ENCODE measurements at regions of chr4 and their contacts with region 1.

Region 1: GRCh38 chr4:7802093-7802726 is 137.5 kb downstream of the AFAP1 start:
- DNase-seq: peak; percentile 91
- ATAC-seq: peak; percentile 97
- H3K4me3 Mint-ChIP-seq: no peak overlapping the region
- H3K27ac Mint-ChIP-seq: no peak overlapping the region
- H3K4me1 Mint-ChIP-seq: peaks cover 9% of the 10 kb centered on the region
- H3K27me3 Mint-ChIP-seq: no peaks in the 10 kb centered on the region
- CTCF ChIP-seq: peak; percentile 93

Region 2: GRCh38 chr4:7761720-7762119 is 40.5 kb before region 1 on chr4:
- CTCF ChIA-PET with region 1: interaction called, 63 read pairs
- POLR2A ChIA-PET with region 1: interaction called, 3 read pairs
- intact Hi-C with region 1: loop called (anchors 5 kb)
- DNase-seq: peak; percentile 71
- ATAC-seq: peak; percentile 63
- H3K4me3 Mint-ChIP-seq: no peak overlapping the region
- H3K27ac Mint-ChIP-seq: peak overlapping the region; percentile 71
- H3K4me1 Mint-ChIP-seq: peaks cover 39% of the 10 kb centered on the region
- H3K27me3 Mint-ChIP-seq: no peaks in the 10 kb centered on the region
- CTCF ChIP-seq: peak; percentile 75

Region 3: DNA sequence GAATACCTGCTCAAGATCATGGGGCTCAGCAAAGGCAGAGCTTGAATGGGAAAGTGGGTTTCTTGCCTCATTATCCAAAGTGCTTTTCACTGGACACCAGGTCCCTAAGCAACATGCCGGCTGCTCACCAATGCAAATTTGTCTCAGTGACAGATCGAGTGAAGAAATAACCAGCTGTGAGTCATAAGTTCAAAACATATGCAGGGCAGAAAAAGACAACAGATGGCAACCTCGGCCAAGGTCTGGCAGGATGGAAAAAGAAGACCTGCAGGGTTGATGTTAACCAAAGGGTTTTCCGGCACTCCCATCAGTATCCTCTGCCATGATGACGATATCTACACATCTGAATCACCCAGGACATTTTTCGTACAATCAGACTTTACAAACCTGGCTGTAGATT is 13.4 kb after region 1 on chr4:
- CTCF ChIA-PET with region 1: interaction called, 14 read pairs
- POLR2A ChIA-PET with region 1: no interaction called
- intact Hi-C with region 1: no loop called
- DNase-seq: no peak
- ATAC-seq: no peak
- H3K4me3 Mint-ChIP-seq: no peak overlapping the region
- H3K27ac Mint-ChIP-seq: no peak overlapping the region
- H3K4me1 Mint-ChIP-seq: no peaks in the 10 kb centered on the region
- H3K27me3 Mint-ChIP-seq: no peaks in the 10 kb centered on the region
- CTCF ChIP-seq: no peak

Region 4: DNA sequence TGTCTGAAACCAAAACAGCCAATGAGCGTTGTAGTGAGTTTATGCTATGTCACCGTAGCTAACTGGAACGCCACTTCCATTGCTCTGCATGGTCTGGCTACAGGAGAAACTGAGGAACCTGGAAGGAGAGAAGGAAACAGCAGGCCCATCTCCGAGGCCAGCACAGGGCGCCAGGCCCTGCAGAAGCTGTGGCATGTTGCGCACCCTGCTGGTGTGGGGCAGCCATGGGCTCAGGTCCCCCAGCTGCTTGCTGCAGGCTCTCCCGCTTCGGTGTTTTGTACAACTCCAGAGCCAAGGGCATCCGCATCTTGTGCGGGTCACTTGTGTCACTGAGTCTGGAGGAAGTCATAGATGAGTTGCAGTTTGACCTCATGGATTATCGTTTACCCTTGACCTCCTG is 48.3 kb after region 1 on chr4:
- CTCF ChIA-PET with region 1: interaction called, 12 read pairs
- POLR2A ChIA-PET with region 1: no interaction called
- intact Hi-C with region 1: no loop called
- DNase-seq: no peak
- ATAC-seq: no peak
- H3K4me3 Mint-ChIP-seq: no peak overlapping the region
- H3K27ac Mint-ChIP-seq: no peak overlapping the region
- H3K4me1 Mint-ChIP-seq: peaks cover 58% of the 10 kb centered on the region
- H3K27me3 Mint-ChIP-seq: no peaks in the 10 kb centered on the region
- CTCF ChIP-seq: no peak